Activated T-helper 2 cell treated with anti-CD3 and anti-CD28 coated beads, Interferon-gamma antibody, Interleukin-2, Interleukin-4, amounts not matched to agents 10 μg/mL and 5 μg/mL and 100 μg/mL, durations not matched to agents 14 hours and 24 hours and 36 hours (primary cell): ENCODE measurements at regions of chr14 and their contacts with region 1.

Region 1: DNA sequence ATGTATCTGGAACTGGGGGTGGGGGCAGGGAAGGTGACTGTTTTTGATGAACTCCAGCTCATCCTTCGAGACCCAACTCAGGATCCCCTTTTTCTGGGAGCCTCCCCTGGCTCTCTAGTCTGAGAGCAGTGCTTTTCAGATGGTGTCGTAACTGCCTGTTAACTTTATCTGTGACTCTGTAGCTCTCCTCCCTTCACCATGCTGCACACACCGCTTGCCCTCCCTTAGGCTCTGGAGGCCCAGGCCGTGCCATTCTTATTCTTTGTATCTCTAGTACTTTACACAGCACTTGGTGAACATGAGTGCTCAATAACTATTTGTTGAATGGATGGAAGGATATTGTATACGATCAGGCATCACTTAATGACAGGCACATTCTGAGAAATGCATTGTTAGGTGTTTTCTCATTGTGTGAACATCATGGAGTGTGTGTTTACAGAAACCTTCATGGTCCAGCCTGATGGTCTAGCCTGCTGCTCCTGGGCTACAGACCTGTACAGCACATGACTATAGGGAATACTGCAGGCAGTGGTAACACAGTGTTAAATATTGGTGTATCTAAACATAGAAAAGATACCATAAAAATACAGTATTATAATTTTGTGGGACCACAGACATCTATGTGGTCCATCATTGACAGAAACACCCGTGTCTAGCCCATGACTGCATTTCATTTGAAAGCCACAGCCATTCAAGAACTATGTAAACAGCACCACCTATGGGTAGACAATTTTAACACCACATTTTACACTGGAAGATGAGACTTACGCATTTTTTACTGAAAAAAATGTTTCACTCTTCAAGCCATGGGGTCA is 91.8 kb downstream of the EML1 start:
- DNase-seq: no peak
- H3K4me3 Mint-ChIP-seq: no peak overlapping the region
- H3K27ac Mint-ChIP-seq: no peak overlapping the region
- H3K4me1 Mint-ChIP-seq: no peaks in the 10 kb centered on the region
- H3K27me3 Mint-ChIP-seq: peaks cover 2% of the 10 kb centered on the region

Region 2: GRCh38 chr14:99729991-99730868 is 154.8 kb before region 1 on chr14:
- intact Hi-C with region 1: loop called (anchors 1 kb)
- DNase-seq: peak; percentile 55
- H3K4me3 Mint-ChIP-seq: peak overlapping the region; percentile 39
- H3K27ac Mint-ChIP-seq: no peak overlapping the region
- H3K4me1 Mint-ChIP-seq: no peaks in the 10 kb centered on the region
- H3K27me3 Mint-ChIP-seq: peaks cover 13% of the 10 kb centered on the region